Activated CD4-positive, alpha-beta T cell treated with anti-CD3 and anti-CD28 coated beads, Interleukin-2, amount 10 ng/mL, durations not matched to agents 7 days and 5 days (primary cell): ENCODE measurements at regions of chr2 and their contacts with region 1.

Region 1: GRCh38 chr2:134118279-134119116 is 135.4 kb upstream of the MGAT5 start:
- DNase-seq: peak; percentile 91
- H3K4me3 Mint-ChIP-seq: peak overlapping the region; percentile 96
- H3K27ac Mint-ChIP-seq: peak overlapping the region; percentile 22
- H3K4me1 Mint-ChIP-seq: peaks cover 38% of the 10 kb centered on the region
- H3K27me3 Mint-ChIP-seq: peaks cover 6% of the 10 kb centered on the region

Region 2: GRCh38 chr2:134136731-134137130 is 18.2 kb after region 1 on chr2:
- CTCF ChIA-PET with region 1: no interaction called
- POLR2A ChIA-PET with region 1: no interaction called
- DNase-seq: no peak
- H3K4me3 Mint-ChIP-seq: no peak overlapping the region
- H3K27ac Mint-ChIP-seq: peak overlapping the region; percentile 21
- H3K4me1 Mint-ChIP-seq: peaks cover 47% of the 10 kb centered on the region
- H3K27me3 Mint-ChIP-seq: no peaks in the 10 kb centered on the region

Region 3: DNA sequence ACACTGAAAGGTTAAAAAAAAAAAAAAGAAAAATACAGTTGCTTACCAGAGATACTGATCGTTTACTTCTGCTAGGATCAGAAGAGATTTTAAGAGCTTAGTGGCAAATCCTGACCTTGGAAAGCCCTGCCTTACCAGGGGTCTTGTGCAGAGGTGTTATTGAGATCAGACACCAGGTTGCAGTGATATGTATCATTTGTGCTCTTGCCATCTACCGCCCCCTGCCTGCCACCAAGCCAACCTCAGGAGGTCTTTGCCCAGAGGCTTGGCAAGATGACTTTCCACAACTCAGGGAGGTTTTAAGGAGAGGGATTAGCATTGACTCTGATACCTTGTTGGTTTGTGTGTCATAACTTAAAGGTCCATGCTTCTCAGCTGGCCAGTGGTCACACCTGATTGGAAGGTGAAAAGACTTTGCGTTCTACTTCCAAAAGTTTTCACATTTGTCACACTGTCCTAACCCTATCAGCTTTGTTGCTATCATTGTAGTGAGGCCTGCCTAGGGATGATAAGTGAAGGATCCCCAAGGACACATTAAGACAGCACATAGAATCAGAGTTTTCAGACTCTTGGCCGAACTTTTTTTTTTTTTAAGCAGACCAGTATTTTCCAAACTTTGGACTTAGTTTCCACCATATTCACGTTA is 89.2 kb after region 1 on chr2:
- CTCF ChIA-PET with region 1: interaction called, 11 read pairs
- POLR2A ChIA-PET with region 1: no interaction called
- DNase-seq: peak; percentile 62
- H3K4me3 Mint-ChIP-seq: no peak overlapping the region
- H3K27ac Mint-ChIP-seq: peak overlapping the region; percentile 7
- H3K4me1 Mint-ChIP-seq: peaks cover 14% of the 10 kb centered on the region
- H3K27me3 Mint-ChIP-seq: no peaks in the 10 kb centered on the region

Region 4: DNA sequence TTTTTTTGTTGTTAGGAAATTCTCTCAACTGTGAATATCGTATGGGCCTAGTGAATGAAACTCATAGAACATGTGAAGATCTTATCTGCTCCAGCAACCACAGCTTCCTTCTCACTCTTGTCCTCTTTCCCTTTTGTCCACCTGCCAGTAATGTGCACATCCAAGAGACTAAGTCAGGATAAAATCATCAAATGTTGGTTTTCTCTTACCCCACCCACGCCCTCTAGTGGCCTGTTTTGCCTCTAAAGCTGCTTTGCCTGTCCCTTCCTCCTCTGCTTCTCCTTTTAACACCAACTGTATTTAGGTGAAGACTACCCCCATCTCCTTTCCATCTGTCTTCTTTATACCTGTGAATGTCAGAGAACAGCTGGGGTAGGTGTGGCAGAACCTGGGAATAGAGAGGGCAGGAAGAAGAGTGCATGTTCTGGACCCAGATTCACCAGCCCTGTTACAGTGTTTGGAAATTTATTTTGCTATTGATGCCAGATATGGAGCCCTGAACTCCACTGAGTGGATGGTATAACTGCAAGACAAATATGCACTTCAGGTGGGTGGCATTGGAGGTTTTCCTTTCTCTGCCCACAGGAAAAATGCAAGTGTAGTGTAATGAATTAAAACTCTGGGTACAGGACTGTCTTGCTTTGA is 127.0 kb after region 1 on chr2:
- CTCF ChIA-PET with region 1: interaction called, 10 read pairs
- POLR2A ChIA-PET with region 1: no interaction called
- DNase-seq: peak; percentile 85
- H3K4me3 Mint-ChIP-seq: no peak overlapping the region
- H3K27ac Mint-ChIP-seq: peak overlapping the region; percentile 33
- H3K4me1 Mint-ChIP-seq: peaks cover 70% of the 10 kb centered on the region
- H3K27me3 Mint-ChIP-seq: no peaks in the 10 kb centered on the region

Region 5: GRCh38 chr2:134411828-134412638 is 293.5 kb after region 1 on chr2:
- CTCF ChIA-PET with region 1: interaction called, 53 read pairs
- POLR2A ChIA-PET with region 1: no interaction called
- DNase-seq: peak; percentile 84
- H3K4me3 Mint-ChIP-seq: no peak overlapping the region
- H3K27ac Mint-ChIP-seq: peak overlapping the region; percentile 31
- H3K4me1 Mint-ChIP-seq: peaks cover 40% of the 10 kb centered on the region
- H3K27me3 Mint-ChIP-seq: no peaks in the 10 kb centered on the region